MCF 10A (cell line): ENCODE measurements at regions of chr11 and their contacts with region 1.

Region 1: GRCh38 chr11:102341844-102342318 is 5.1 kb upstream of the BIRC2 start:
- DNase-seq: peak; percentile 91
- H3K4me3 Mint-ChIP-seq: no peak overlapping the region
- H3K27ac Mint-ChIP-seq: no peak overlapping the region
- H3K4me1 Mint-ChIP-seq: peaks cover 40% of the 10 kb centered on the region
- H3K27me3 Mint-ChIP-seq: no peaks in the 10 kb centered on the region
- CTCF ChIP-seq: peak; percentile 67

Region 2: GRCh38 chr11:102293873-102294601 is 47.8 kb before region 1 on chr11:
- CTCF ChIA-PET with region 1: interaction called, 101 read pairs
- POLR2A ChIA-PET with region 1: interaction called, 36 read pairs
- intact Hi-C with region 1: loop called (anchors 1 kb)
- DNase-seq: peak; percentile 70
- H3K4me3 Mint-ChIP-seq: peak overlapping the region; percentile 35
- H3K27ac Mint-ChIP-seq: peak overlapping the region; percentile 7
- H3K4me1 Mint-ChIP-seq: peaks cover 18% of the 10 kb centered on the region
- H3K27me3 Mint-ChIP-seq: no peaks in the 10 kb centered on the region
- CTCF ChIP-seq: peak; percentile 52

Region 3: GRCh38 chr11:102317099-102317767 is 24.6 kb before region 1 on chr11 and contains the start of gene BIRC3:
- CTCF ChIA-PET with region 1: interaction called, 7 read pairs
- POLR2A ChIA-PET with region 1: interaction called, 13 read pairs
- intact Hi-C with region 1: no loop called
- DNase-seq: peak; percentile 96
- H3K4me3 Mint-ChIP-seq: peak within 1 kb of the TSS; percentile 85
- H3K27ac Mint-ChIP-seq: peak within 1 kb of the TSS; percentile 99
- H3K4me1 Mint-ChIP-seq: peaks cover 50% of the 10 kb centered on the region
- H3K27me3 Mint-ChIP-seq: no peaks in the 10 kb centered on the region
- CTCF ChIP-seq: no peak
- total RNA-seq, gene BIRC3: 91.6 and 124 TPM in 2 replicates

Region 4: DNA sequence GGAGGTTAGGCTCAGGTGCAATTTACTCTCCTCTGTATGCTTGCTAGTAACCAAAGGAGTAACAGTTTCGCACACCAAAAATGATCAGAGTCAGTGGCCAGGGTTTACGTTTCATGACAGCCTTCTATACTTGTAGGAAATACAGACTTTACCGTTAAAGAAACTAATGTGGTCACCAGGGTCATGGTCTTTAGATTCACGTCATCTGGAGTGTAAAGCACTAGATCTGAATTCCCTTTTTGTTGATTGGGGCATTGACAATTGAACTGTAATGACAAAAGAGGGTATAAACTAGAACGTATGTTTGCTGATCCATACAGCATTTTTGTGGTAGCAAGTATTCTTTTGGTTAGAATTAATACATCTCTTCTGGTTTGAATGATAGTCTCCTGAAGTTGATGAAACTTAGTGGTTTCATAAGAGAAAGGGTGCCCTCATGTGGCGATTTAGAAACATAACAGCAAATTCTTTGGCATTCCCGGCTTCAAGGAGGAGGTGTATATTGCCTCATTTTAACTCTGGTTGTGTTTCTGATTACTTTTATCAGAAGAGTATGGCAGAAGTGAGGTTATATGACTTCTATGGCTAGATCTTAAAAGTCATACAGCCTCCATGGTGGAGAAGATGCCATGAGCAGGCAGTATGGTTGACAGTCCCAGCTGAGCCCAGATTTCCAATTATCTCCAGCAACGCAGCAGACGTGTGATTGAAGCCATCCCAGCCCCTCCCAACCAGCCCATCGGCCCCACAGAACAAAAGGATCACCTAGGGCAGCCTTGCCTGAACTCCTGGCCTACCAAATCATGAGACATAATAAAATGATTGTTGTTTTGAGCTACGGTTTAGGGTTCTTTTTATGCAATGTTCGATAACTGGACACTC is 153.5 kb after region 1 on chr11:
- CTCF ChIA-PET with region 1: interaction called, 28 read pairs
- POLR2A ChIA-PET with region 1: no interaction called
- intact Hi-C with region 1: loop called (anchors 1 kb)
- DNase-seq: peak; percentile 93
- H3K4me3 Mint-ChIP-seq: no peak overlapping the region
- H3K27ac Mint-ChIP-seq: no peak overlapping the region
- H3K4me1 Mint-ChIP-seq: peaks cover 17% of the 10 kb centered on the region
- H3K27me3 Mint-ChIP-seq: no peaks in the 10 kb centered on the region
- CTCF ChIP-seq: no peak